Kidney (tissue), 22 donors: ENCODE measurements at regions of chr6 and their contacts with region 1.

Region 1: GRCh38 chr6:149429427-149430360 is 29.6 kb downstream of the SUMO4 start:
- DNase-seq: no peak
- H3K4me3 ChIP-seq: no peak overlapping the region
- H3K27ac ChIP-seq: no peak overlapping the region
- H3K4me1 ChIP-seq: peaks cover 0 to 3% (median 0%) of the 10 kb centered on the region in 3 donors
- H3K27me3 ChIP-seq: no peaks in the 10 kb centered on the region
- CTCF ChIP-seq: no peak

Region 2: DNA sequence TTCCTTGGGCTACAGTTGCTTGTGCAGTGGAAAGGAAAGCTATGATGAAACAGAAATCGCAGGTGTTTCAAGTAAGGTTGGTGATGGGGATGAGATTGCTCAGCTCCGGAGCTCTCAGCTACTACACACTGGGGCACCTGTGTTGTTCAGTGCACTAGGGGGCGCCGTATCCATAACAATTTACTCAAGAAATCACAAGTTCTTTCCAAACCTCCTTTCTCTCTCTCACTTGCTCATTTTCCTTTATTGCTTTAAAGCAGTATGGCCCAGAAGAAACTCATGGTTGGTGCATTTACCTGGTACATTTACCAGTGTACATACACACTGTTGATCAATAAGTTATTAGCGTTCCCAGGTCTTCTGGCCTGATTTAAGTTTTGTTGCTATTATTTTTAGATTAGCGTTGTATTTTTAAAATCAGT is 347.4 kb before region 1 on chr6:
- intact Hi-C with region 1: loop called (anchors 10 kb)
- DNase-seq: peak; percentile 76 to 88 (median 81)
- H3K4me3 ChIP-seq: no peak overlapping the region
- H3K27ac ChIP-seq: no peak overlapping the region
- H3K4me1 ChIP-seq: peaks cover 0 to 3% (median 0%) of the 10 kb centered on the region in 3 donors
- H3K27me3 ChIP-seq: no peaks in the 10 kb centered on the region
- CTCF ChIP-seq: peak; percentile 87